ENCODE measurements at regions of chr1 and their contacts with region 1.

Region 1: GRCh38 chr1:227482023-227482299 is 81.4 kb upstream of the ZNF678 start:
- DNase-seq: no peak
- ATAC-seq: no peak
- H3K4me3 Mint-ChIP-seq: no peak overlapping the region
- H3K27ac Mint-ChIP-seq: no peak overlapping the region
- H3K4me1 Mint-ChIP-seq: peaks cover 7% of the 10 kb centered on the region
- H3K27me3 Mint-ChIP-seq: peaks cover 18% of the 10 kb centered on the region
- CTCF ChIP-seq: no peak

Region 2: DNA sequence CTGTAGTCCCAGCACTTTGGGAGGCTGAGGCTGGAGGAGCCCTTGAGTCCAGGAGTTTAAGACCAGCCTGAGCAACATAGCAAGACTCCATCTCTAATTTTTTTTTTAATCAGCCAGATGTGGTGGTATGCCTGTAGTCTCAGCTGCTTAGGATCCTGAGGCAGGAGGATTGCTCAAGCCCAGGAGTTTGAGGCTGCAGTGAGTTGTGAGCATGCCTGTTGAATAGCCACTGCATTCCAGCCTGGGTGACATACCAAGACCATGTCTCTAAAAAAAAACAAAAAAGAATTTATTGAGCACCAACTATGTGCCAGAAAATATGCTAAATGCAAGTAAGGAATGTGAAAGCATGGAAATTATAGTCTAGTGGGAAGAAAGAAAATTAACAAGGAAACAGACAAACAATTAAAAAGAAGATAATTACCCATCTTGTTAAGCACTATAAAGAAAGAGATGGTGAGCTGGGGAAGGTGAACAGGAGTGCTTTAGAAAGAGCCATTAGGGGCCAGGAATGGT is 22.6 kb before region 1 on chr1:
- CTCF ChIA-PET with region 1: no interaction called
- POLR2A ChIA-PET with region 1: no interaction called
- intact Hi-C with region 1: no loop called
- DNase-seq: no peak
- ATAC-seq: no peak
- H3K4me3 Mint-ChIP-seq: no peak overlapping the region
- H3K27ac Mint-ChIP-seq: no peak overlapping the region
- H3K4me1 Mint-ChIP-seq: no peaks in the 10 kb centered on the region
- H3K27me3 Mint-ChIP-seq: peaks cover 14% of the 10 kb centered on the region
- CTCF ChIP-seq: no peak

Region 3: GRCh38 chr1:227508431-227508830 is 26.5 kb after region 1 on chr1:
- CTCF ChIA-PET with region 1: no interaction called
- POLR2A ChIA-PET with region 1: no interaction called
- intact Hi-C with region 1: no loop called
- DNase-seq: no peak
- ATAC-seq: no peak
- H3K4me3 Mint-ChIP-seq: no peak overlapping the region
- H3K27ac Mint-ChIP-seq: no peak overlapping the region
- H3K4me1 Mint-ChIP-seq: no peaks in the 10 kb centered on the region
- H3K27me3 Mint-ChIP-seq: peaks cover 3% of the 10 kb centered on the region
- CTCF ChIP-seq: no peak

Region 4: DNA sequence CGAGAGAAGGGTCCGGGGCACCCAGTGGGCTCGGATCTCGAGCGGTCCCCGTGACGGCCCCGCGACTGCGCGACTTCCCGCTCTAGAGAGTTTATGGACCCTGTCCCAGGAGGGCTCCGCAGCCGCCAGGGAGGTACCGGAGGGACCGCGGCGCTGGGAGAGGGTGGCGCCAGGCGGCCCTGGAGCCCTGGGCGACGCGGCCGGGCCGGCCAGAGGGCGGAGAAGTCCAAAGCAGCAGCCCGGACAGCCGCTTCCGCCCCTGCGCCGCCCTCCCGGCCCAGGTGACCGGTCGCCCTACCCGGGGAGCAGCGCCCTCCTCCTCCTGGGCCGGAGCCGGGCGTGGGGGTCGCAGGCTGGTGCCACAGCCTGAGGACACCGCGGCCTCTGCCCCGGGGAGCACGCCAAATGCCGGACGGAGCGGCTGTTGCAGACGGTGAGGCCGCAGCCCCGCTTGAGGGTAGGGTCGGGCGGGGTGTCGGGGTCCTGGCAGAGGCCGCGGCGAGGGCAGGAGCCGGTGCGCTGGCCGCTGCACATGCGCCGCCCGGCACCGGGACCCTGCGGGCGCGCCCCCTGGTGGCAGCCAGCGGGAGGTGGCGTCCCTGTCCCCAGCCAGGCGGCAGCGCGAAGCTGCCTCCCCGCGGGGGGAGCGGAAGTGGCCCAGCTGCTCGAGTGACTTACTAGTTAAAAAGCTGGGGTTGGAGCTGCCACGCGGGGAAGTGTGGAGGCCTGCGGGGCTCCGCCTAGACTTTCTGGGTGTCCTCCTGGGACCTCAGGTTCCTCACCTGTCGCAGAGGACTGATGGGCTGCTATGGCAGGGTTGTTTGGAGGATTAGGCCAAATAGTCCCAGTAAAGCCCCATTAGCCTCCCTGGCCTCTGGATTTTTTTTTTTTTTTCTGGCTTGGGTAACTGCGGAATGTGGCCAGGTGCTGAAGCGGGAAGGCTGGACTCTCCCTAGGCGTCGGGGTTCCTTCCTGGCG is 60.5 kb after region 1 on chr1:
- CTCF ChIA-PET with region 1: interaction called, 13 read pairs
- POLR2A ChIA-PET with region 1: no interaction called
- intact Hi-C with region 1: loop called (anchors 1 kb)
- DNase-seq: peak; percentile 90
- ATAC-seq: peak; percentile 97
- H3K4me3 Mint-ChIP-seq: peak overlapping the region; percentile 68
- H3K27ac Mint-ChIP-seq: no peak overlapping the region
- H3K4me1 Mint-ChIP-seq: peaks cover 5% of the 10 kb centered on the region
- H3K27me3 Mint-ChIP-seq: no peaks in the 10 kb centered on the region
- CTCF ChIP-seq: peak; percentile 65

Region 5: GRCh38 chr1:227762233-227762911 is 280.4 kb after region 1 on chr1:
- CTCF ChIA-PET with region 1: interaction called, 12 read pairs
- POLR2A ChIA-PET with region 1: no interaction called
- intact Hi-C with region 1: no loop called
- DNase-seq: peak; percentile 66
- ATAC-seq: peak; percentile 91
- H3K4me3 Mint-ChIP-seq: no peak overlapping the region
- H3K27ac Mint-ChIP-seq: no peak overlapping the region
- H3K4me1 Mint-ChIP-seq: peaks cover 17% of the 10 kb centered on the region
- H3K27me3 Mint-ChIP-seq: no peaks in the 10 kb centered on the region
- CTCF ChIP-seq: peak; percentile 49

Region 6: GRCh38 chr1:227954163-227954850 is 472.3 kb after region 1 on chr1:
- CTCF ChIA-PET with region 1: interaction called, 14 read pairs
- POLR2A ChIA-PET with region 1: no interaction called
- intact Hi-C with region 1: loop called (anchors 2 kb)
- DNase-seq: no peak
- ATAC-seq: no peak
- H3K4me3 Mint-ChIP-seq: no peak overlapping the region
- H3K27ac Mint-ChIP-seq: no peak overlapping the region
- H3K4me1 Mint-ChIP-seq: no peaks in the 10 kb centered on the region
- H3K27me3 Mint-ChIP-seq: peaks cover 30% of the 10 kb centered on the region
- CTCF ChIP-seq: no peak

Region 7: GRCh38 chr1:228500901-228501871 is 1019.2 kb after region 1 on chr1:
- CTCF ChIA-PET with region 1: no interaction called
- POLR2A ChIA-PET with region 1: no interaction called
- intact Hi-C with region 1: loop called (anchors 5 kb)
- DNase-seq: peak; percentile 72
- ATAC-seq: peak; percentile 96
- H3K4me3 Mint-ChIP-seq: peak overlapping the region; percentile 77
- H3K27ac Mint-ChIP-seq: peak overlapping the region; percentile 84
- H3K4me1 Mint-ChIP-seq: peaks cover 17% of the 10 kb centered on the region
- H3K27me3 Mint-ChIP-seq: peaks cover 9% of the 10 kb centered on the region
- CTCF ChIP-seq: peak; percentile 91